Sigmoid colon (tissue), 7 donors: ENCODE measurements at regions of chr2 and their contacts with region 1.

Region 1: GRCh38 chr2:230913406-230914143 is 11.5 kb downstream of the GPR55 start:
- DNase-seq: peak; percentile 77
- H3K4me3 ChIP-seq: no peak overlapping the region
- H3K27ac ChIP-seq: no peak overlapping the region
- H3K4me1 ChIP-seq: no peaks in the 10 kb centered on the region
- H3K27me3 ChIP-seq: no peaks in the 10 kb centered on the region
- CTCF ChIP-seq: peak in 3 of 4 experiments; percentile 46 to 63 (median 61)
- EP300 ChIP-seq: no peak
- POLR2A ChIP-seq: no peak

Region 2: DNA sequence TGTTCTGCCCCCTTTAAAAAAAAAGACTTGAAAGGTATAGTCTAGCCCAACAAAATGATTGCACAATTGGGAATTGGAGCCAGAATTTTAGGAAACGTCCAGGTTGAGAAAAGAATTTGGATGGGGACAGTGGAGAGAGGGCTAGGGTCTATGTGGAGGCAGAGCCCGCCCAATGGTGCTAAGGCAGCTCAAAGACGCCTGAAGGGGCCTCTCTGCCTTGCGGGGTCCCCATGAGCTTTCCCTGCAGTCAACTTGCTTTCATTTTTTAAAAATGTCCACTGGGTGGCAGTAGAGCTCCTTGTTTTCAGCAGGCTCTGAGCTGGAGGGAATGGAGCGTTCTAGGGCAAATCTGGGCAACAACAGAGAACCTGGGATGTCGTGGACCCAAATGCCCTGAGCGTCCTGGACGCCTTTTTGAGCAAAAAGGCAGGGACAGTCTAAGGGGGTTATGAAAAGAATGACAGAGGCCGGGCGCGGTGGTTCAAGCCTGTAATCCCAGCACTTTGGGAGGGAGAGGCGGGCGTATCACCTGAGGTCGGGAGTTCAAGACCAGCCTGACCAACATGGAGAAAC is 89.1 kb before region 1 on chr2:
- intact Hi-C with region 1: loop called (anchors 2 kb)
- DNase-seq: no peak
- H3K4me3 ChIP-seq: peak overlapping the region in 3 of 4 donors; percentile 14 to 34 (median 20)
- H3K27ac ChIP-seq: no peak overlapping the region
- H3K4me1 ChIP-seq: peaks cover 0 to 17% (median 12%) of the 10 kb centered on the region in 4 donors
- H3K27me3 ChIP-seq: peaks cover 5 to 35% (median 25%) of the 10 kb centered on the region in 3 donors
- CTCF ChIP-seq: peak in 3 of 4 experiments; percentile 64 to 73 (median 68)
- EP300 ChIP-seq: no peak
- POLR2A ChIP-seq: no peak

Region 3: DNA sequence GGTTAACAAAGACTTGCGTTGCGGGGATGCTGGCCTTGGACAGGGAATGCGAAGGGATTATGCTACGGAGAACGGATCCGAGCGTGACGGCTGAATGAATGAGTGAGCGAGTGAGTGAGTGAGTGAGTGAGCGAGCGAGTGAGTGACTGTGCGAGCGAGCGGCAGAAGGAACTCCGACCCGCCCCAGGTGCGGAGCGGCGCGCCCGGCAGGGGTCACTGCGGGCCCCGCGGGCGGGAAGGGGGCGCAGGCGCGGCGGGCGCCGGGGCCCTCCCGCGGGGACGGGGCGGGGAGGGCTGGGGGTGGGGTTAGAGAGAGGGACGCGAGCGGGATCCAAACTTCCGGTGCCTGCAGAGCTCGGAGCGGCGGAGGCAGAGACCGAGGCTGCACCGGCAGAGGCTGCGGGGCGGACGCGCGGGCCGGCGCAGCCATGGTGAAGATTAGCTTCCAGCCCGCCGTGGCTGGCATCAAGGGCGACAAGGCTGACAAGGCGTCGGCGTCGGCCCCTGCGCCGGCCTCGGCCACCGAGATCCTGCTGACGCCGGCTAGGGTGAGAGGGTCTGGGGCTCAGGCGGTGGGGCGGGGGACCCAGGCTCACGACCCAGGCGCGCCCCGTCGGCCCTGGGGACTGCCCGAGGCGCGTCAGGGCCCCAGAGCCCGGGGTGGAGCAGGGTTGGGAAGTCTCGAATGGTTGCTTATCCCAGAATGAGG is 48.8 kb before region 1 on chr2 and contains the start of gene ITM2C:
- intact Hi-C with region 1: loop called (anchors 5 kb)
- DNase-seq: peak; percentile 84
- H3K4me3 ChIP-seq: peak within 1 kb of the TSS; percentile 66 to 84 (median 78)
- H3K27ac ChIP-seq: peak within 1 kb of the TSS; percentile 71 to 88 (median 82)
- H3K4me1 ChIP-seq: peaks cover 0 to 51% (median 47%) of the 10 kb centered on the region in 4 donors
- H3K27me3 ChIP-seq: no peaks in the 10 kb centered on the region
- CTCF ChIP-seq: peak in 1 of 4 experiments; percentile 35
- EP300 ChIP-seq: no peak
- POLR2A ChIP-seq: peak; percentile 61 to 67
- total RNA-seq, gene ITM2C: 107 to 206 (median 117) TPM